ENCODE measurements at regions of chr17 and their contacts with region 1.

Region 1: DNA sequence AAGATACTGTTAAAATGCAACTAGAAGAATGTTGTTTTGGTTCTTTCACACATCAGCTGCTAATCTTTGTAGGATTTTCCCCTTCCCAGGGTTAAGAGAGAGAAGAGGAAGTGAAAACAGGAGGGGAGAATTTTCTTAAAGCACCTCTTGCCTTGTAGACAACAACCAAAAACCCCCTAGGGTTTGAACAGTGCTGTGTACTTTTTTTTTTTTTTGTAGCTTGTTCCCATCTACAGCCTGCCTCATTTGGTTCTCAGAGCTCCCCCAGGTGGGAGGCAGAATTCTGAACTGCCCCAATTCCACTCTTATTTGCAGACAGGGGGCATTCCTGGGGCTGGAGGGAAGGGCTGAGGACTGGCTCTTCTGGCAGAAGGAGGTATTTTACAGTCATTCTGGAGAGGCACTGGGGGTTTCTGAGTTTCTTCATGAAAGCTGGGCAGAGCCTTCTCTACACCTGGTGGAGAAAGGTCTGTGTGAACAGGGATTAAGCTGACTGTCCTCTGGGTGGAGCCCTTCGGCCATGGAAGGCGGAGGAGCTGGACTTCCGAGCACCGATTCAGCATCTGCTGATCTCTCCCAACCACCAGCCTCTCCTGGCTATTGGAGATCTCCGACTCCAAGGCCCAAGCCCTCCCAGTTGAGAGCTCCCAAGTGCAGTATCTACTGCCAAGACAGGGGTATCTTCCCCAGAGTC is 32.2 kb downstream of the SMARCE1 start:
- DNase-seq: no peak
- H3K4me3 ChIP-seq: no peak overlapping the region
- H3K27ac ChIP-seq: no peak overlapping the region
- H3K27me3 ChIP-seq: peaks cover 37% of the 10 kb centered on the region
- CTCF ChIP-seq: peak; percentile 52

Region 2: DNA sequence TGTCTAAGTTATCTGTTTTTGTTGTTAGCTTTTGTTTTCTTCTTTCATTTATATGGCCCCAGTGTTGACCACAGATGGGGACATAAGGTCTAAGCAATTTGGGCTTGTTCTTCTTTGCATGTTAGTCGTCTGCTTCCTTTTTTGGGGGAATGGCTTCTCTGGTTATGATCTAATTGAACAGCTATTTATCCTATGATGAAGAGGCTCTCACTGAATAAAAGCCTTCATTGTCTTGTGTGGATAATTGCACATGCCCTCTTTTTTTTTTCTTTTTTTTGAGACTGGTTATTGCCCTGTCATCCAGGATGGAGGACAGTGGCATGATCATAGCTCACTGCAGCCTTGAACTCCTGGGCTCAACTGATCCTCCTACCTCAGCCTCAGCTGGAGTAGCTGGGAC is 18.4 kb after region 1 on chr17:
- CTCF ChIA-PET with region 1: interaction called, 14 read pairs
- POLR2A ChIA-PET with region 1: no interaction called
- DNase-seq: no peak
- H3K4me3 ChIP-seq: no peak overlapping the region
- H3K27ac ChIP-seq: no peak overlapping the region
- H3K27me3 ChIP-seq: no peaks in the 10 kb centered on the region
- CTCF ChIP-seq: no peak

Region 3: DNA sequence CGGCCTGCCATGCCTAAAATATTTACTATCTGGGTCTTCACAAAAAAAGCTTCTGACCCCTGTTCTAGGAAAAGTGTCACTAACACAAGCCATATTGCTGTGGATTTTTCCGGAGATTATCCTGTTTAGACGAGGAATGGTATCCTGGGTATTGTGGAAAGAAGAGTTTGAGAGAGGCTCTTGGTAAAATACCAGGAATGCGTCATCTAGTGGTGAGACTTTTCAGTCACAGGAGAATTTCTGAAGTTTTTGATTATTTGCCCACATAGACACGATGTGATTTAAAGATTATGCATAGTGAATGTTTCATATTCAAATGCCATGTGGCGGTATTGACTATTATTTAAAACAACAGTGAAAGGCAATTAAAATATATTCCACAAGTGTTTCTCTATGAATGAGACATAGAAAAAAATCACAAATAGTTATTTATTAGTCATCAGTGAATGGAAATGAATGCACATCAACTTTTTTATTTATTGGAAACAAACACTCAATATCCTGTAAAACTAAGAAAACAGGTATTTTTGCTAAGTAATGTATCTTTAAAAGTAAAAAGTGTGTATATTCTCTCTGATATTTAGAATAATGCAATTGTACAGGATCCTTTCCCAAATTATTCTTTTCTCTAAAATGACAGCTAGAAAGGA is 176.5 kb after region 1 on chr17:
- CTCF ChIA-PET with region 1: interaction called, 51 read pairs
- POLR2A ChIA-PET with region 1: no interaction called
- DNase-seq: peak; percentile 11
- H3K4me3 ChIP-seq: no peak overlapping the region
- H3K27ac ChIP-seq: no peak overlapping the region
- H3K27me3 ChIP-seq: peaks cover 27% of the 10 kb centered on the region
- CTCF ChIP-seq: peak; percentile 79